B cell (primary cell): ENCODE measurements at regions of chr19 and their contacts with region 1.

Region 1: DNA sequence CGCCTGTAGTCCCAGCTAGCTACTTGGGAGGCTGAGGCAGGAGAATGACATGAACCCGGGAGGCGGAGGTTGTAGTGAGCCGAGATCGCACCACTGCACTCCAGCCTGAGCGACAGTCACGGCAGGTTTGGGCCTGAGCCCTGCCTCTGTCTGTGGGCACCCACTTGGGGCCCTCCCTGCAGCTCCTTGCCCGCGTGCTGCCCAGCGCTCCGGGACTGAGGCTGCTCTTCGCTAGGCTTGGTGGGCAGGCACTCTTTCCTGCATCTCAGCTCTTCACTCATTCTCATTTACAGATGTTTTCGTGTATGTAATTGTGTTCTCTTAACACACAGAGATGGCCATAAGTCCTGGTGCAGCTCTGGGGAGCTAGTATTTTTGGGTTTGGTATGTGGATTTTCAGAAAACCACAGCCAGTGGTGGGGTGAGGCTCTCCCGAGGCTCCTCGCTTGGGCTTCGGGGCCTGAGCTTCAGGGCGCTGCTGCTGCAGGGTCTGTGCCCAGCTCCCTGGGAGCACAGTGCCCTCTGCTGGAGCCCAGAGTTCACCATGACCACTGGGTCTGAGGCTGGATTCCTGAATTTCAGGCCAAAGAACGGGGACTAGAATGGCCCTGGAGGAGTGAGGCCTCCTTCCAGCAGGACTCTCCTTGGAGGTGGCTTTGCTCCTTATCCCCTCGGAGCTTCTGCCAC is 15.2 kb downstream of the UPF1 start:
- DNase-seq: peak; percentile 78
- ATAC-seq: peak; percentile 76
- H3K4me3 ChIP-seq: no peak overlapping the region
- H3K4me3 Mint-ChIP-seq: peak overlapping the region; percentile 21
- H3K27ac ChIP-seq: no peak overlapping the region
- H3K27ac Mint-ChIP-seq: peak overlapping the region; percentile 64
- H3K4me1 ChIP-seq: peaks cover 32 to 52% of the 10 kb centered on the region in 2 donors
- H3K4me1 Mint-ChIP-seq: peaks cover 69% of the 10 kb centered on the region
- H3K27me3 ChIP-seq: no peaks in the 10 kb centered on the region
- H3K27me3 Mint-ChIP-seq: no peaks in the 10 kb centered on the region
- CTCF ChIP-seq: peak; percentile 84

Region 2: GRCh38 chr19:18450931-18451845 is 395.8 kb before region 1 on chr19:
- CTCF ChIA-PET with region 1: interaction called, 27 read pairs
- POLR2A ChIA-PET with region 1: no interaction called
- intact Hi-C with region 1: loop called (anchors 1 kb)
- DNase-seq: peak; percentile 87
- ATAC-seq: peak; percentile 96
- H3K4me3 ChIP-seq: no peak overlapping the region
- H3K4me3 Mint-ChIP-seq: no peak overlapping the region
- H3K27ac ChIP-seq: no peak overlapping the region
- H3K27ac Mint-ChIP-seq: peak overlapping the region; percentile 71
- H3K4me1 ChIP-seq: peaks cover 0 to 5% of the 10 kb centered on the region in 2 donors
- H3K4me1 Mint-ChIP-seq: peaks cover 6% of the 10 kb centered on the region
- H3K27me3 ChIP-seq: no peaks in the 10 kb centered on the region
- H3K27me3 Mint-ChIP-seq: no peaks in the 10 kb centered on the region
- CTCF ChIP-seq: peak; percentile 96

Region 3: DNA sequence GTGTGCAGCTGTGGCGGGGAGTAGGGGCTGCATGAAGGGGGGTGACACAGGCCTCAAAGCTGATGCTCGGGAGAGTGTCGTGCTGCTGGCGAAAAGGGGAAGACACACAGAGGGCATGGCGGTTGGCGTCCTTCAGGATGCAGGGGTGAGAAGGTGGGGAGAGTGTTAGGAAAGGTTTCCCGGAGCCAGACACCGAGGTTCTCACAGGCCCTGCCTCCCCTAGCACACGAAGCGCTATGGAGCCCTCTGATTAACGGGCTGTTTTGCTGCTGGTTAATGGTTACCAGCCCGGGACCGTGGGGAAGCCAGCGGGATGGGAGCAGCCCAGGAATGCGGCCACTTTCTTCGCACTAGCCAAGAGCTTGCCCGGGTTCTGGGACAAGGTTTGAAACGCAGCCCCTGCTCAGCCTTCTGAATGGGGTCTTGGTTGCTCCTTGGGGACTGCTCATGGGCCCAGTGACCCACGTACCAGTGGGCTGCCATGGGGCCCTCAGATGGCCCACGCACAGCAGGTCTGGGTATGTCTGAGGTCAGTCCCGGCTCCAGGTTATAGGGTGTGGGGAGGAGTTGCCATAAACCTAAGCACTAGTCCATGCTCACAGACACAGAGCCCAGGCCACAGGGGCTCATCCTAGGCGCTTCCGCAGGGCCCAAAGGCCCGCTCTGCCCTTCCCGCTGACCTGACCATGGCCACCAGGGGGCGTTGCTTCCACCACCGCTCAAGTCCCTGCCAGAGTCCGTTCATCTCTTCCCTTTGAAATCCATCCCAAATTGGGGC is 377.7 kb before region 1 on chr19:
- CTCF ChIA-PET with region 1: interaction called, 9 read pairs
- POLR2A ChIA-PET with region 1: no interaction called
- intact Hi-C with region 1: loop called (anchors 1 kb)
- DNase-seq: peak; percentile 70
- ATAC-seq: no peak
- H3K4me3 ChIP-seq: no peak overlapping the region
- H3K4me3 Mint-ChIP-seq: no peak overlapping the region
- H3K27ac ChIP-seq: no peak overlapping the region
- H3K27ac Mint-ChIP-seq: no peak overlapping the region
- H3K4me1 ChIP-seq: no peaks in the 10 kb centered on the region
- H3K4me1 Mint-ChIP-seq: peaks cover 10% of the 10 kb centered on the region
- H3K27me3 ChIP-seq: no peaks in the 10 kb centered on the region
- H3K27me3 Mint-ChIP-seq: no peaks in the 10 kb centered on the region
- CTCF ChIP-seq: peak; percentile 71

Region 4: GRCh38 chr19:18594096-18594823 is 252.7 kb before region 1 on chr19:
- CTCF ChIA-PET with region 1: interaction called, 47 read pairs
- POLR2A ChIA-PET with region 1: interaction called, 4 read pairs
- intact Hi-C with region 1: loop called (anchors 1 kb)
- DNase-seq: peak; percentile 86
- ATAC-seq: peak; percentile 86
- H3K4me3 ChIP-seq: peak overlapping the region in 4 of 5 experiments; percentile 42 to 69 (median 48)
- H3K4me3 Mint-ChIP-seq: peak overlapping the region; percentile 79
- H3K27ac ChIP-seq: no peak overlapping the region
- H3K27ac Mint-ChIP-seq: peak overlapping the region; percentile 59
- H3K4me1 ChIP-seq: peaks cover 21 to 39% of the 10 kb centered on the region in 2 donors
- H3K4me1 Mint-ChIP-seq: peaks cover 25% of the 10 kb centered on the region
- H3K27me3 ChIP-seq: peaks cover 0 to 29% (median 8%) of the 10 kb centered on the region in 4 experiments
- H3K27me3 Mint-ChIP-seq: peaks cover 7% of the 10 kb centered on the region
- CTCF ChIP-seq: peak; percentile 84

Region 5: DNA sequence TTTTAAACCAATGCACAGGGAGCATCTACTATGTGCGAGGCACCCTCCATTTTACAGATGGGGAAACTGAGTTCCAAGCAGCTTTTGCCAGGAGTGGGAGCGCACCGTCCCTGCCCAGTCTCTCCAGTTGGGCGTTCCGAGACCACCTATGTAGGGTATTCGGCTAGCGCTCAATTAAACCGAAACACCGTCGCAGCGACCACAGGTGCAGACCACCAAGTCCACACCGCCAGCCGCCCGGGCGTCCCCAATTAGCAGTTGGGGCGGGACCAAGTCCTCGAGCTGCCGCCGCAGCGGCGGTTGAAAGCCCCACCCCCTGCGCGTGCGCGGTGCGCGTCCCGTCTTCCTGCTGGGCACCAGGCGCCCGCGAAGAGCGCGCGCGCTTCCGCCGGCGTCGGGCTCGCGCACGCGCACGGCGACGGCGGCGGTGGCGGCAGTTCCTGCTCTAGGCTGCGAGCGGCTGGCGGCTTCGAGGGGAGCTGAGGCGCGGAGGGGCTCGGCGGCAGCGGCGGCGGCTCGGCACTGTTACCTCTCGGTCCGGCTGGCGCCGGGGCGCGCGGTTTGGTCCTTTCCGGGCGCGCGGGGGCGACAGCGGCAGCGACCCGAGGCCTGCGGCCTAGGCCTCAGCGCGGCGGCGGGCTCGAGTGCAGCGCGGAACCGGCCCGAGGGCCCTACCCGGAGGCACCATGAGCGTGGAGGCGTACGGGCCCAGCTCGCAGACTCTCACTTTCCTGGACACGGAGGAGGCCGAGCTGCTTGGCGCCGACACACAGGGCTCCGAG is 15.3 kb before region 1 on chr19 and contains the start of gene UPF1:
- CTCF ChIA-PET with region 1: interaction called, 41 read pairs
- POLR2A ChIA-PET with region 1: no interaction called
- intact Hi-C with region 1: loop called (anchors 1 kb)
- DNase-seq: peak; percentile 97
- ATAC-seq: peak; percentile 81
- H3K4me3 ChIP-seq: peak within 1 kb of the TSS; percentile 63 to 82 (median 73)
- H3K4me3 Mint-ChIP-seq: peak within 1 kb of the TSS; percentile 91
- H3K27ac ChIP-seq: peak within 1 kb of the TSS; percentile 60 to 90
- H3K27ac Mint-ChIP-seq: peak within 1 kb of the TSS; percentile 92
- H3K4me1 ChIP-seq: peaks cover 34 to 39% of the 10 kb centered on the region in 2 donors
- H3K4me1 Mint-ChIP-seq: peaks cover 36% of the 10 kb centered on the region
- H3K27me3 ChIP-seq: no peaks in the 10 kb centered on the region
- H3K27me3 Mint-ChIP-seq: peaks cover 8% of the 10 kb centered on the region
- CTCF ChIP-seq: no peak
- total RNA-seq, gene UPF1: 95.1 and 98.6 TPM in 2 replicates

Region 6: DNA sequence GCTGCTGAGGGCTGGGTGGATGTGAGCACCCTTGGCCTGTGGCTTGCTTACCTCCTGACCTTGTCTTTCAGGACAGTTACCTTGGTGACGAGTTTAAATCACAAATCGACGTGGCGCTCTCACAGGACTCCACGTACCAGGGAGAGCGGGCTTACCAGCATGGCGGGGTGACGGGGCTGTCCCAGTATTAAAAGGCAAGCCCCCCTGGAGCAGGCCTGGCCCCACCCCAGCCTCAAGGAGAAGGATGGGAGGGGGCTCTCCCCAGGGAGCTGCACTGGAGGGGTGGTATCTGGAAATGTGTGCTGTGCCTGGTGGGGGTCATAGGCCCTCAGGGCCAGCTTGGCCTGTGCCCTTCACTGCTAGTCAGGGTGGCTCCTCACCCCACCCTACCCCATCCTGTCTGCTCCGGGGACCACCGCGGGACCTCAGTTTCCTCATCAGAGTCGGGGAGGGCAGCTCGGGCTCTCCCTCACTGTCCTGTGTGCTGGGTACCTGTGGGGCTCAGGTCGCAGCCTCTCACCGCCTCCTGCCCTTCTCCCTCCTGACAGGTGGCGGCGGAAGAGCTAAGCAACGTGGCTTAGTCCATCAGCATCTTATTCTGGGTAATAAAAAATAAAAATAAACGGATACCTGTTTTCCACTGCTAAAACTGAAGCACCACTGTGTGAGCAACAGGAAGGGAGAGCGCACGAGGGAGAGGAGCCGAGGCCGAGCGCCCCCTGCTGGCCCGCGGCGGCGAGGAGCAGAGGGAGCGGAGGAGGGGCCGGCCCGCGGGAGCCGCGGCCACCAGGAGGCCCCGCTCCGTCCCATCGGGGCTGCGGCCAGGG is 19.2 kb after region 1 on chr19:
- CTCF ChIA-PET with region 1: interaction called, 17 read pairs
- POLR2A ChIA-PET with region 1: interaction called, 4 read pairs
- intact Hi-C with region 1: no loop called
- DNase-seq: peak; percentile 76
- ATAC-seq: peak; percentile 82
- H3K4me3 ChIP-seq: no peak overlapping the region
- H3K4me3 Mint-ChIP-seq: no peak overlapping the region
- H3K27ac ChIP-seq: no peak overlapping the region
- H3K27ac Mint-ChIP-seq: no peak overlapping the region
- H3K4me1 ChIP-seq: peaks cover 12 to 18% of the 10 kb centered on the region in 2 donors
- H3K4me1 Mint-ChIP-seq: peaks cover 13% of the 10 kb centered on the region
- H3K27me3 ChIP-seq: peaks cover 0 to 12% (median 3%) of the 10 kb centered on the region in 4 experiments
- H3K27me3 Mint-ChIP-seq: peaks cover 5% of the 10 kb centered on the region
- CTCF ChIP-seq: peak; percentile 98